Ovary (tissue), 10 donors: ENCODE measurements at regions of chr7 and their contacts with region 1.

Region 1: GRCh38 chr7:151110941-151111645 is 24.8 kb downstream of the AGAP3 start:
- DNase-seq: peak; percentile 71 to 84 (median 83)
- H3K4me3 ChIP-seq: no peak overlapping the region
- H3K27ac ChIP-seq: no peak overlapping the region
- H3K4me1 ChIP-seq: peaks cover 7% of the 10 kb centered on the region
- H3K27me3 ChIP-seq: no peaks in the 10 kb centered on the region
- CTCF ChIP-seq: peak; percentile 80 to 90 (median 88)
- EP300 ChIP-seq: no peak
- POLR2A ChIP-seq: no peak

Region 2: GRCh38 chr7:150898475-150899011 is 212.6 kb before region 1 on chr7:
- intact Hi-C with region 1: loop called in 3 of 4 experiments (anchors 5 kb)
- DNase-seq: peak; percentile 68 to 88 (median 80)
- H3K4me3 ChIP-seq: no peak overlapping the region
- H3K27ac ChIP-seq: no peak overlapping the region
- H3K4me1 ChIP-seq: no peaks in the 10 kb centered on the region
- H3K27me3 ChIP-seq: no peaks in the 10 kb centered on the region
- CTCF ChIP-seq: peak; percentile 85 to 91 (median 90)
- EP300 ChIP-seq: no peak
- POLR2A ChIP-seq: no peak

Region 3: DNA sequence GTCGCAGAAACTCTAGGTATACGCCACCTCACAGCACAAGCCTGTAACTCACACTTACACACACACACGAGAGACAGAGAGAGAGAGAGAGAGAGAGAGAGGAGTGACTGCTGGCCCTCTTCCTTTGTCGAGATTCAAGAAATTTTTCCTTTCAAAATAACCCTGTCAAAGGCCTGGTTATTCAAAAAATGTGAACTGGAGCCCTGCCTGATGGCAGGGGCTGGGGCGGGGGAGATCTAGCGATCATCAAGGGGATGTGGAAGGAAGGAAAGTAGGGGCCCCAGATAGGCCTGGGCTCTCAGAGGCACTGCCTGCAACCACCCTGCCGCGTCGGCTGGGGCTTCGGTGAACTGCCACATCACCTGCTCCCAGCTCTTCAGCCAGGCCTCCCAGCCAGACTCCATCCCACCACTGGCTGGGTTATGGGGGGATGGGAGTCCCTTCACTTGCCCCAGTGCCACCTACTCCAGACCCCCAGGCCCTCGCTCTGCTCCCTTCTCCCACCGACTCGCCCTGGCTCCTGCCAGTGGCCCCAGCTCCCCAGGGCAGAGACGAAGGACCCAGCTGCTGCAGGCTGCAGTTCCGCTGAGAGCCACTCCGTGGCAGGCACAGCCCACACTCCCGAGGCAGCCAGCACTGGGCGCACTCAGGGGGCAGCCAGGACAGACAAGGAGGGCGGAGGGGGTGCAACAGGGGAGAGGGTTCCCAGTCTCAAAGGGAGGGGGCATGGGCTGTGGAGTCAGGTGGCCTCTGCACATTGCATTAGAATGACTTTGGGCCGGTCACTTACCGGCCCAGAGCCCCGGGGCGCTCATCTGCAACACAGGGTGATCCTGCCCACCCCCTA is 148.3 kb before region 1 on chr7:
- intact Hi-C with region 1: loop called in 1 of 4 experiments (anchors 5 kb)
- DNase-seq: peak; percentile 57 to 79 (median 70)
- H3K4me3 ChIP-seq: no peak overlapping the region
- H3K27ac ChIP-seq: peak overlapping the region in 1 of 2 donors; percentile 16
- H3K4me1 ChIP-seq: peaks cover 13% of the 10 kb centered on the region
- H3K27me3 ChIP-seq: no peaks in the 10 kb centered on the region
- CTCF ChIP-seq: peak; percentile 81 to 89 (median 83)
- EP300 ChIP-seq: no peak
- POLR2A ChIP-seq: no peak

Region 4: DNA sequence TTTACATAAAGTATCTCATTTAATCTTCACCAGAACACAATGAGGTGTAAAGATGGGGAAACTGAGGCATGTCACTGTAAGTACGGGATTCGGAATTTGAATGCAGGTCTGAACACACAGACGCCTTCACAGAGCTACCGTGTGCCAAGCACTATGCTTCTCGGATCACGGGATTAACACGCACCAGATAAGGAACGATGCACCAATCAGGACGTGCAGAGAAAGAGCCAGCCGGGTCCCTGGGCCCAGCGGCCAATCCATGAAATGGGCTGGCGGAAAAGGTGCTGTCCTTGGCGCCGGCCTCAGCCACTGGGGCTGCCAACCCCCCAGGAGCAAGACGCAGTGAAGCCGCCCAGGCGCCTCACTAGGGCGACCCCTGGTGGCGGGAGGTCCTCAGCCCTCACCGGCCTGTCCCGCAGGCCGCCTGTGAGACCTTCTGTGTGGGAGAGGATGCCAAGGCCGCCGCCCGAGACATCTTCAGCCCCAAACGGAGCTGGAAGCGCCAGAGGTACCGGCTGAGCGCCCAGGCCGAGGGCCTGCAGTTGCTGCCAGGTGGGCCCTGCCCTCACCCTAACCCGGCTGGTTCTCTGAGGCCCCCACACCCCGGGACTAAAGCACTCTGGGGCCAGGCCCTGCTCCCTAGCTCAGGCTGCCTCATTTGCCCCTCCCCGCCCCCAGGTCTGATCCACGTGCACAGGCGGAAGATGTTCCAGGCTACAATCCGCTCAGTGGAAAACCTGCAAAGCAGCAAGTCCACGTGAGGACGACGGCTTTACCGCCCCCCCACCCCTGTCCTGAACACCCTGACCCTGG is 102.4 kb before region 1 on chr7:
- intact Hi-C with region 1: loop called in 3 of 4 experiments (anchors 5 to 10 kb)
- DNase-seq: peak; percentile 76 to 91 (median 86)
- H3K4me3 ChIP-seq: no peak overlapping the region
- H3K27ac ChIP-seq: no peak overlapping the region
- H3K4me1 ChIP-seq: peaks cover 5% of the 10 kb centered on the region
- H3K27me3 ChIP-seq: no peaks in the 10 kb centered on the region
- CTCF ChIP-seq: peak; percentile 71 to 89 (median 86)
- EP300 ChIP-seq: no peak
- POLR2A ChIP-seq: no peak

Region 5: DNA sequence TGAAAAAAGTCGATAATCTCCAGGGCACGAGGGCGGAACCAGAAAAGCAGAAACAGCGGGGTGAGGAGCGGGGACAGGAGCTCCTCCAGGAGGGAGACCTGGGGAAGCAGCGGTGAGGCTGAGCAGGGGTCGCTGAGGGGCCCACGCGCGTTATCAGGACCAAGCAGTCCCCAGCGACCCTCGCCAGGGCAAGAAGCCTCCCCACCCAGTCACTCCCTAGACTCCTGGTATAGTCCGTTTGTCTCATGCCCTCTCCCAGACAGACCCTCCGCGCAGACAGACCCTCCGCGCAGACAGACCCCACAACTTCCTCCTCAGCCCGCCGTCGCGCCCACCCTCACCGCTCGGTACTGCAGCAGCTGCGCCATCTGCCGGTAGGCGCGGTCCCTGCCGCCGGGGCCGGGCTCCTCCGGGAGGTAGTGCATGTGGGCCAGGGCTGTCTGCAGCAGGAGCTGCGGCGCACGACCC is 93.1 kb before region 1 on chr7:
- intact Hi-C with region 1: loop called in 2 of 4 experiments (anchors 10 kb)
- DNase-seq: peak; percentile 50 to 83 (median 76)
- H3K4me3 ChIP-seq: no peak overlapping the region
- H3K27ac ChIP-seq: no peak overlapping the region
- H3K4me1 ChIP-seq: peaks cover 6% of the 10 kb centered on the region
- H3K27me3 ChIP-seq: no peaks in the 10 kb centered on the region
- CTCF ChIP-seq: peak; percentile 61 to 83 (median 79)
- EP300 ChIP-seq: no peak
- POLR2A ChIP-seq: no peak

Region 6: GRCh38 chr7:151038951-151039849 is 71.9 kb before region 1 on chr7:
- intact Hi-C with region 1: loop called in 1 of 4 experiments (anchors 5 kb)
- DNase-seq: peak; percentile 65 to 79 (median 77)
- H3K4me3 ChIP-seq: no peak overlapping the region
- H3K27ac ChIP-seq: peak overlapping the region in 1 of 2 donors; percentile 64
- H3K4me1 ChIP-seq: peaks cover 8% of the 10 kb centered on the region
- H3K27me3 ChIP-seq: no peaks in the 10 kb centered on the region
- CTCF ChIP-seq: no peak
- EP300 ChIP-seq: no peak
- POLR2A ChIP-seq: no peak